Dorsolateral prefrontal cortex (tissue), 120 donors: ENCODE measurements at regions of chr4 and their contacts with region 1.

Region 1: GRCh38 chr4:17447675-17448298 is 64.1 kb downstream of the QDPR start:
- DNase-seq: peak in 4 of 10 donors; percentile 11 to 72 (median 36)
- H3K4me3 ChIP-seq: no peak overlapping the region
- H3K27ac ChIP-seq: no peak overlapping the region
- H3K27me3 ChIP-seq: no peaks in the 10 kb centered on the region
- CTCF ChIP-seq: peak; percentile 33 to 85 (median 74)

Region 2: GRCh38 chr4:16034010-16034829 is 1413.6 kb before region 1 on chr4:
- intact Hi-C with region 1: loop called in 1 of 2 experiments (anchors 10 kb)
- DNase-seq: no peak
- H3K4me3 ChIP-seq: no peak overlapping the region
- H3K27ac ChIP-seq: peak overlapping the region in 2 of 59 donors; percentile 11 to 16
- H3K27me3 ChIP-seq: no peaks in the 10 kb centered on the region
- CTCF ChIP-seq: no peak

Region 3: DNA sequence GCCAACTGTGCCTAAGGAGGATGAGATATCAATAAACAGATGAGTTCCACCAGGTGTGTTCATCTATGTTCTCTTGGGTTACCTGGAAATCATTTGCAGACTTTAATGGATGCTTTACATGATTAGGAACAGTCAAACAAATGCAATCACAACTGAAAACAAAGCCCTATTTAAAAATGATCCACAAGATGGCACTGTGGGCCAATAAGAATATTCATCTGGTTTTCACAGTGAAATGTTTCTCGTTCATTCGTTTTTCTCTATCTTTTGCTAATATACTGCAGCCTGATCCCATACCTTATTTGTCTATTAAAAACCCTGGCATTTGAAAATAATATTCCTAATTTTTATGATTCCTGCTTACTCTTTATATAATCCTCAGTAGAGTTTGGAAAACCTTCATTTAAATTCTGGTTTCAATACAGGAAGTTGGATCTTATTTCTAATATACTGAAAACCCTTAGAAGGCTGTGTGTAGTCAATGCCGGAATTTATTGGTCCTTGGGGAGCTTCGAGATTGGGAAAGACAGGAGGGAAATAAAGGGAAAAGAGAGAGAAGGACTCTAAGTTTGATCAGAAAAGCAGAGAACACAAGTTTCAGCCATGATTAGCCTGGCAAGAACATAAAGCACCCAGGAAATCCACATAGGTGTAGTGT is 1157.8 kb before region 1 on chr4:
- intact Hi-C with region 1: loop called in 1 of 2 experiments (anchors 5 kb)
- DNase-seq: no peak
- H3K4me3 ChIP-seq: peak overlapping the region in 35 of 59 donors; percentile 4 to 46 (median 19)
- H3K27ac ChIP-seq: peak overlapping the region in 33 of 59 donors; percentile 1 to 78 (median 27)
- H3K27me3 ChIP-seq: no peaks in the 10 kb centered on the region
- CTCF ChIP-seq: peak; percentile 64 to 93 (median 80)

Region 4: GRCh38 chr4:17347445-17347844 is 100.3 kb before region 1 on chr4:
- intact Hi-C with region 1: loop called (anchors 1 to 10 kb)
- DNase-seq: no peak
- H3K4me3 ChIP-seq: no peak overlapping the region
- H3K27ac ChIP-seq: no peak overlapping the region
- H3K27me3 ChIP-seq: no peaks in the 10 kb centered on the region
- CTCF ChIP-seq: peak in 55 of 56 donors; percentile 19 to 72 (median 56)

Region 5: GRCh38 chr4:17356926-17357325 is 90.9 kb before region 1 on chr4:
- intact Hi-C with region 1: loop called in 1 of 2 experiments (anchors 10 kb)
- DNase-seq: peak in 8 of 10 donors; percentile 5 to 70 (median 52)
- H3K4me3 ChIP-seq: no peak overlapping the region
- H3K27ac ChIP-seq: peak overlapping the region in 15 of 59 donors; percentile 4 to 71 (median 22)
- H3K27me3 ChIP-seq: no peaks in the 10 kb centered on the region
- CTCF ChIP-seq: no peak

Region 6: GRCh38 chr4:17740702-17741101 is 292.9 kb after region 1 on chr4:
- intact Hi-C with region 1: no loop called
- DNase-seq: no peak
- H3K4me3 ChIP-seq: no peak overlapping the region
- H3K27ac ChIP-seq: no peak overlapping the region
- H3K27me3 ChIP-seq: no peaks in the 10 kb centered on the region
- CTCF ChIP-seq: no peak